HCT116 (cell line): ENCODE measurements at regions of chr4 and their contacts with region 1.

Region 1: GRCh38 chr4:114659386-114660008 is 60.9 kb downstream of the UGT8 start:
- DNase-seq: peak; percentile 73
- ATAC-seq: peak; percentile 100
- H3K4me3 ChIP-seq: no peak overlapping the region
- H3K27ac ChIP-seq: no peak overlapping the region
- H3K4me1 ChIP-seq: no peaks in the 10 kb centered on the region
- H3K27me3 ChIP-seq: no peaks in the 10 kb centered on the region
- CTCF ChIP-seq: peak; percentile 74 to 95 (median 91)
- POLR2A ChIP-seq: no peak
- RAD21 ChIP-seq: peak; percentile 87

Region 2: GRCh38 chr4:114161809-114162208 is 497.7 kb before region 1 on chr4:
- CTCF ChIA-PET with region 1: no interaction called
- POLR2A ChIA-PET with region 1: no interaction called
- RAD21 ChIA-PET with region 1: no interaction called
- intact Hi-C with region 1: no loop called
- DNase-seq: no peak
- ATAC-seq: peak; percentile 49
- H3K4me3 ChIP-seq: no peak overlapping the region
- H3K27ac ChIP-seq: no peak overlapping the region
- H3K4me1 ChIP-seq: no peaks in the 10 kb centered on the region
- H3K27me3 ChIP-seq: no peaks in the 10 kb centered on the region
- CTCF ChIP-seq: no peak
- POLR2A ChIP-seq: no peak
- RAD21 ChIP-seq: peak; percentile 27

Region 3: GRCh38 chr4:114417214-114417613 is 242.3 kb before region 1 on chr4:
- CTCF ChIA-PET with region 1: interaction called, 10 read pairs
- POLR2A ChIA-PET with region 1: no interaction called
- RAD21 ChIA-PET with region 1: interaction called in 1 of 2 experiments, 3 read pairs
- intact Hi-C with region 1: loop called (anchors 1 kb)
- DNase-seq: peak; percentile 10
- ATAC-seq: no peak; the same call in 1 of the 2 replicates
- H3K4me3 ChIP-seq: no peak overlapping the region
- H3K27ac ChIP-seq: no peak overlapping the region
- H3K4me1 ChIP-seq: no peaks in the 10 kb centered on the region
- H3K27me3 ChIP-seq: no peaks in the 10 kb centered on the region
- CTCF ChIP-seq: peak in 2 of 3 experiments; percentile 23 to 41; a peak in 2 of 6 replicates
- POLR2A ChIP-seq: no peak
- RAD21 ChIP-seq: peak; percentile 63

Region 4: GRCh38 chr4:114509340-114509739 is 150.2 kb before region 1 on chr4:
- CTCF ChIA-PET with region 1: interaction called, 5 read pairs
- POLR2A ChIA-PET with region 1: no interaction called
- RAD21 ChIA-PET with region 1: interaction called in 1 of 2 experiments, 5 read pairs
- intact Hi-C with region 1: loop called (anchors 1 kb)
- DNase-seq: no peak
- ATAC-seq: no peak
- H3K4me3 ChIP-seq: no peak overlapping the region
- H3K27ac ChIP-seq: no peak overlapping the region
- H3K4me1 ChIP-seq: no peaks in the 10 kb centered on the region
- H3K27me3 ChIP-seq: no peaks in the 10 kb centered on the region
- CTCF ChIP-seq: 0 out of 6 replicates have a peak, but pooled peaks of 2 of the 3 experiments have one; percentile 11 to 19
- POLR2A ChIP-seq: no peak
- RAD21 ChIP-seq: peak; percentile 48; the same call in 1 of the 2 replicates

Region 5: DNA sequence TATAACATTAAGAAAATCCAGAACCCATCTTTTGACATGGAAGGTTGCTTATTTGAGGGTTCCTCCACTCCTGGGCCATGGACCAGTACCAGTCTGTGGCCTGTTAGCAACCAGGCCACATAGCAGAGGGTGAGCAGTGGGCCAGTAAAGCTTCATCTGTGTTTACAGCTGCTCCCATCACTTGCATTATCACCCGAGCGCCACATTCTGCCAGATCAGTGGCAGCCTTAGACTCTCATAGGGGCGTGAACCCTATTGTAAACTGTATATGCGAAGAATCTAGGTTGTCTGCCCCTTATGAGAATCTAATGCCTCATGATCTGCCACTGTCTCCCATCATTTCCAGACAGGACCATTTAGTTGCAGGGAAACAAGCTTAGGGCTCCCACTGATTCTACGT is 395.3 kb after region 1 on chr4:
- CTCF ChIA-PET with region 1: no interaction called
- POLR2A ChIA-PET with region 1: no interaction called
- RAD21 ChIA-PET with region 1: no interaction called
- intact Hi-C with region 1: no loop called
- DNase-seq: no peak
- ATAC-seq: no peak
- H3K4me3 ChIP-seq: no peak overlapping the region
- H3K27ac ChIP-seq: no peak overlapping the region
- H3K4me1 ChIP-seq: no peaks in the 10 kb centered on the region
- H3K27me3 ChIP-seq: no peaks in the 10 kb centered on the region
- CTCF ChIP-seq: no peak
- POLR2A ChIP-seq: no peak
- RAD21 ChIP-seq: no peak